WTC11 (cell line): ENCODE measurements at regions of chr17 and their contacts with region 1.

Region 1: DNA sequence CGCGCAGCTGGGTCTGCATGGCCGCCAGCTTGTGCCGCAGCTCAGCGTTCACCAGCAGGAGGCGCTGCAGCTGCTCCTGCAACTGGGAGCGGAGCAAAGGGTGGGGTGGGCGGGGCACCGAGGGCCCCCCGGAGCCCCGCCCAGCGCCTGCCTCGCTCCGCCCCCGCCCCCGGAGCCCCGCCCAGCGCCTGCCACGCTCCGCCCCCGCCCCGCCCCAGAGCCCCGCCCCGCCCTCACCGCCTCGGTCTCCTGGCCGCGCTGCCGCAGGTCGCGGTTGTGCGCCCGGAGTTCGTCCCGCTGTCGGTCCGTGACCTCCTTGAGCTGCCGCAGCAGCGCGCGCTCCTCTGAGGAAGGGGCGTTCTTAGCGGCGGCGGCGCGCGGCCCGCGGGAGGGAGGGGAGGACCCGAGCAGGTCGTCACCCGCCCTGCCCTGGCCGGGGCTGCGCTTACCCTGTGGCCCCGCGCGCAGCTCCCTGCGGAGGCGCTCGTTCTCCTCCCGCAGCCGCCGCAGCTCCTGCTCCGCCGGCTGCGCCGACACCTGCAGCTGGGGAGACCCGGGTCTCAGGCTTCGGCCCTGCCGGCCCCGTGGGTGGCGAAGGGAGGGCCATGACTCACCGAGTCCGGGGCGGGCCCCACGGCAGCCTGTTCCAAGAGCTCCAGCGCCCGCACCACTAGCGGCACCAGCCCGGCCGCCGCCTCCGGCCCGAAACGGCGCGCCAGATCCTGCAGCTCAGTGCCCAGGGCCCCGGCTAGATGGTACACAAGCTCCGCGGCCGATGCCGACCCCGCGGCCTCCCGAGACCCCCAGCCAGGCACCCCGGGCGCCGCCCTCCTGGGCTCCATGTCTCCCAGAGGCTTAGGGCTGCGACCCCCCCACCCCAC is 463 bp downstream of the RILP start:
- DNase-seq: peak; percentile 95
- ATAC-seq: peak; percentile 56
- H3K4me3 Mint-ChIP-seq: peak overlapping the region; percentile 72
- H3K27ac Mint-ChIP-seq: no peak overlapping the region
- H3K4me1 Mint-ChIP-seq: peaks cover 29% of the 10 kb centered on the region
- H3K27me3 Mint-ChIP-seq: peaks cover 3% of the 10 kb centered on the region
- CTCF ChIP-seq: peak; percentile 86; the same call in 1 of the 2 replicates

Region 2: DNA sequence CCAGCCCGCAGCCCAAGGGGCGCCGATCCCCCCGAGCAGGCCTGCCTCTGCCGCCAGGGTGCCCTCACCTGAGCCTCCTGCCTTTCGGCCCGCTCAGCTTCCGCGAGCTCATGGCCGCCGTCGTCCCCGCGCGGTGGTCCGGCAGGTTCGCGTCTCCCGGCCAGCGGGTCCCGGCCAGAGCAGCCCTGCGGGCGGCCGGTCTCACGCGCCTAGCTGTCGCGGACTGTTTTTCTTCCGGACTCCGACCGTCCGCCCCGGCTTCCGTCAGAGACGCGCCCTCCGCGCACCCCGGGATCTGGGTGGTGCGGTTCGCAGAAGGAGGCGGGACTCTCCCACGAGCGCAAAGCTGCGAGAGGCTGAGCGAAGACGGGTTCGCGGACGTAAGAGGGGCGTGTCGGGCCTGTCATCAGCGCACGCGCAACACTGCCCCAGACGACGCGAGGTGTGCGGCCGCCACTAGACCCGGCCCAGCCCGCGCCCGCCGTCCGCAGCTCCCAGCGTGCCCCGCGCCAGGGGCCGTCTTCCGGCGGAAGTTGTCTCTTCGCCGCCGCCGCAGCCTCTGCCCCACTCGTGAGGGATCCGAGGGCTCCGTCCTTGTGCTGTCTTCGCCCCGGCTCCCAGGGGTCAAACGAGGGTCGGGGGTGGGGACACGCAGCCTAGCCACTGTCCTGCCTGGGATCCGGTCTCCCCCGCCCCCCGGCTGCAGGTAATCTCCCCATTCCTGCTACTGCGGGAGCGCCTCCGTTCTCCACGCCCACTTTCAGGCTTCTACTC is 132.6 kb before region 1 on chr17 and contains the start of gene INPP5K:
- CTCF ChIA-PET with region 1: interaction called, 13 read pairs
- POLR2A ChIA-PET with region 1: interaction called, 3 read pairs
- DNase-seq: peak; percentile 93
- ATAC-seq: peak; percentile 93
- H3K4me3 Mint-ChIP-seq: peak within 1 kb of the TSS; percentile 88
- H3K27ac Mint-ChIP-seq: peak within 1 kb of the TSS; percentile 97
- H3K4me1 Mint-ChIP-seq: peaks cover 14% of the 10 kb centered on the region
- H3K27me3 Mint-ChIP-seq: no peaks in the 10 kb centered on the region
- CTCF ChIP-seq: no peak
- total RNA-seq, gene INPP5K: 17.1 to 26.8 TPM (median 18.5 TPM) in 3 replicates

Region 3: DNA sequence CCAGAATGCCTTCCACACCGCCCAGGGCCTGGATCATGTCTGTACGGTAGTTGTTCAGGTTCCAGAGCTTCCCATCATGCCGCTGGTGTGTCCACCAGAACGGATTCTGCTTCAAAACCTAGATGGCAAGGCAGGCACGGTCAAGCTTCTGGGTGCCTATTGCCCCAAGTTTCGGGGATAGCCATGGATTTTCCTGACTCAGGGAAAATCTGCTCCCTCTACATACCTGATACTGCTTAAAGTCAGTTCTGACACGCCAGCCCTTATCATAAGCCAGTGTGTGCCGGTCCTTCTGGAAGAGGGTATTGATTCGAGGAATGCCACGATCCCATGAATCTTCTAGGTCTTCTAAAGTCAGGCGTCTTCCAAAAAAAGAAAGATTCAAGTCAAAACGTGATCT is 11.8 kb after region 1 on chr17:
- CTCF ChIA-PET with region 1: interaction called, 12 read pairs
- POLR2A ChIA-PET with region 1: interaction called, 6 read pairs
- DNase-seq: no peak
- ATAC-seq: no peak
- H3K4me3 Mint-ChIP-seq: no peak overlapping the region
- H3K27ac Mint-ChIP-seq: no peak overlapping the region
- H3K4me1 Mint-ChIP-seq: no peaks in the 10 kb centered on the region
- H3K27me3 Mint-ChIP-seq: no peaks in the 10 kb centered on the region
- CTCF ChIP-seq: no peak

Region 4: DNA sequence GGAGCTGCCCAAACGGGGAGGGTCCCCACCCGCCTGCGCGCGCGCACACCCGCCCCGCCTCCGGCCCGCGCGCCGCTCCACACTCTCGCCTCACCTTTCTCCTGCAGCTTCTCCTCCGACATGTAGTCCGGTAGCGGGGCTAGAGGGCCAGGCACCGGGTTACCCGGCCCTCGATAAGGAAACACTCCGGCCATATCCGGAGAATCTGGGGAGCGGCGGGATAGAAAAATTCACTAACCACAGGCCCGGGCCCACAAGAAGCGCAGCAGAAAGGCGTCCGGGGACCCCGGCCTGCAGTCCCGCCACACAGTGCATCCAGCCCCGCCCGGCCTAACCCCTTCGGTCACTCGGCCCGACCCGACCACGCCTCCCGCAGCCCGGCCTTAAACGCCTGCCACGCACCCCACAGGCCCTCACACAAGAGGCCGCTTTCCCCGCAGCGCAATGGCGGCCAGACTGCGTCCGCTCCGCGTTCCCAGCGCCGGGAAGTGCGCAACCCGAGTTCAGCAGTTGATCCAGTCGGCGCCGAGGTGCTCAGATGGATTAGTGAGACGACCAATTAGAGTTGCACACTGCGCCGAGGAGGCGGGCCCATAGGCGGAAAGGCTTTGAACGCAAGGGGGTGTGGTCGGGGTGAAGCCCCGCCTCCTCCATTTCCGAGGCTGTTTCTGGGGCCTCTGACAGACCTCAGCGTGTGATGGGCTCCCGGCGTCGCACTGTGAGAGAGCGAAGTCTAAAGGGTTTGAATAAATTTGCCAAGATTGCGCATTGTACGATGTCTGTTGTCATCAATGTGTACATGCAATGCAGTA is 35.4 kb after region 1 on chr17 and contains the start of gene PRPF8:
- CTCF ChIA-PET with region 1: interaction called, 11 read pairs
- POLR2A ChIA-PET with region 1: interaction called, 6 read pairs
- DNase-seq: peak; percentile 98
- ATAC-seq: peak; percentile 99
- H3K4me3 Mint-ChIP-seq: peak within 1 kb of the TSS; percentile 95
- H3K27ac Mint-ChIP-seq: peak within 1 kb of the TSS; percentile 99
- H3K4me1 Mint-ChIP-seq: peaks cover 13% of the 10 kb centered on the region
- H3K27me3 Mint-ChIP-seq: no peaks in the 10 kb centered on the region
- CTCF ChIP-seq: no peak
- total RNA-seq, gene PRPF8: 323 to 388 TPM (median 328 TPM) in 3 replicates

Region 5: GRCh38 chr17:1724506-1725362 is 75.5 kb after region 1 on chr17 and contains the start of gene WDR81:
- CTCF ChIA-PET with region 1: interaction called, 14 read pairs
- POLR2A ChIA-PET with region 1: no interaction called
- DNase-seq: peak; percentile 89
- ATAC-seq: peak; percentile 64
- H3K4me3 Mint-ChIP-seq: peak within 1 kb of the TSS; percentile 62
- H3K27ac Mint-ChIP-seq: no peak within 1 kb of the TSS
- H3K4me1 Mint-ChIP-seq: peaks cover 4% of the 10 kb centered on the region; the same call in 1 of the 2 replicates
- H3K27me3 Mint-ChIP-seq: no peaks in the 10 kb centered on the region; the same call in 1 of the 2 replicates
- CTCF ChIP-seq: no peak
- total RNA-seq, gene WDR81: 14.0 to 16.4 TPM (median 15.1 TPM) in 3 replicates